H1 (cell line): ENCODE measurements at regions of chr11 and their contacts with region 1.

Region 1: GRCh38 chr11:1572197-1573076 is at the start of gene DUSP8:
- DNase-seq: peak in 1 of 2 experiments; percentile 88
- H3K4me3 ChIP-seq: peak within 1 kb of the TSS; percentile 27 to 71 (median 34)
- H3K27ac ChIP-seq: no peak within 1 kb of the TSS
- H3K4me1 ChIP-seq: peaks cover 0 to 46% (median 31%) of the 10 kb centered on the region in 4 experiments; a peak in 6 of 7 replicates
- H3K27me3 ChIP-seq: peaks cover 18 to 54% (median 49%) of the 10 kb centered on the region in 4 experiments
- CTCF ChIP-seq: no peak
- EP300 ChIP-seq: no peak
- POLR2A ChIP-seq: no peak
- RAD21 ChIP-seq: no peak
- total RNA-seq, gene DUSP8: 2.1 and 2.8 TPM in 2 replicates

Region 2: DNA sequence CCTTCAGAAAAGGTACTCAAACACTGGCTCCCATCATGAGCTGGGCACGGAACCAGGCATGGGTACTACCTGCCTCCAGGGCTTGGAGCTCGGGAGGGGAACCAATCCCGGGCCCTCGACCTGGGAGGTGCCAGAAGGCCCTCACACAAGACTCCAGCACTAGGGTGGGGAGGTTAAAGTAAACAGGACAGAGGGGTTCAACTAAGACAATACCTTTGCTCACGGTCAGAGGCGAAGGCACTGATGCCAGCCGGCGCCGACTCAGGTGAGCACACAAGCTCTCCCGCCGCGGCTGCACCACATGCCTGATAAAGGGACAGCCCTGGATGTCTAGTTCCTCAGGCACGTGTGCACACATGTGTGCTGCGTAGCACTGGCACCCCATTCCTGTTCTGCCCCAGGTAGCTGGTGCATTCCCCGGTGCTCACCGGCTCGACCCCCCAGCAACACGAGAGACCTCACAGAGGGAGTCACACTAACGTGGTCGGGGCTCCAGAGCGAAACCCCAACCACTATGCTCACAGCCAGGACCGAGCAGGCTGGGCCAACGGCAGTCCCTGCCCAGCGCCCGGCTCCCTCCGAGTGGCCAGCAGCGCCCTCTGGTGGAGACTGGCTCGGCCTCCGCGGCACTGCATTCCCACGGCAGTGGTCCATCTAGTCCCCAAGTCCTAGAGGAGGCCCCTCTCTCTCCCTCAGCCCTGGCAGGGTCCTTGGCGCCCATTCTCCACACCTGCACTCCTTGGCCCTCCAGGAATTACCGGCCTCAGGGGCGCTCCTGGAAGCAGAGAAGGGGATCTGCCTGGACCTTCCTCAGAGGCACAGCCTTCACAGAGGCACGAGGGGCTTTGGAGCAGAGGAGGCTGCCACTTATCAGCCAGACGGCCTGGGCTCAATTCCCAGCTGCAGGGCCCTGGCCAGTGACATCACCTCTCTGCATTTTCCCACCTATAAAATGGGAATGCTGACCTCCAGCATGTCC is 57.1 kb before region 1 on chr11:
- CTCF ChIA-PET with region 1: interaction called, 13 read pairs
- POLR2A ChIA-PET with region 1: no interaction called
- DNase-seq: peak; percentile 49 to 99
- H3K4me3 ChIP-seq: no peak overlapping the region
- H3K27ac ChIP-seq: no peak overlapping the region
- H3K4me1 ChIP-seq: peaks cover 0 to 9% (median 8%) of the 10 kb centered on the region in 4 experiments; a peak in 6 of 7 replicates
- H3K27me3 ChIP-seq: no peaks in the 10 kb centered on the region
- CTCF ChIP-seq: peak; percentile 91 to 98 (median 92)
- EP300 ChIP-seq: no peak
- POLR2A ChIP-seq: no peak
- RAD21 ChIP-seq: peak; percentile 91 to 92

Region 3: GRCh38 chr11:1541474-1542204 is 30.8 kb before region 1 on chr11:
- CTCF ChIA-PET with region 1: interaction called, 144 read pairs
- POLR2A ChIA-PET with region 1: interaction called, 34 read pairs
- DNase-seq: no peak
- H3K4me3 ChIP-seq: no peak overlapping the region
- H3K27ac ChIP-seq: no peak overlapping the region; the same call in 1 of the 2 replicates
- H3K4me1 ChIP-seq: peaks cover 0 to 18% (median 12%) of the 10 kb centered on the region in 4 experiments; a peak in 6 of 7 replicates
- H3K27me3 ChIP-seq: peaks cover 0 to 31% (median 21%) of the 10 kb centered on the region in 4 experiments; a peak in 6 of 7 replicates
- CTCF ChIP-seq: no peak
- EP300 ChIP-seq: no peak
- POLR2A ChIP-seq: no peak
- RAD21 ChIP-seq: no peak

Region 4: GRCh38 chr11:1559119-1559951 is 13.1 kb before region 1 on chr11:
- CTCF ChIA-PET with region 1: interaction called, 140 read pairs
- POLR2A ChIA-PET with region 1: interaction called, 58 read pairs
- DNase-seq: peak in 1 of 2 experiments; percentile 80
- H3K4me3 ChIP-seq: peak overlapping the region in 2 of 4 experiments; percentile 5 to 14; a peak in 1 of 8 replicates
- H3K27ac ChIP-seq: no peak overlapping the region
- H3K4me1 ChIP-seq: peaks cover 8 to 53% (median 41%) of the 10 kb centered on the region in 4 experiments
- H3K27me3 ChIP-seq: peaks cover 18 to 49% (median 41%) of the 10 kb centered on the region in 4 experiments
- CTCF ChIP-seq: no peak
- EP300 ChIP-seq: no peak; a peak in 1 of 3 replicates
- POLR2A ChIP-seq: no peak
- RAD21 ChIP-seq: peak in 1 of 2 experiments; percentile 3; a peak in 1 of 4 replicates

Region 5: DNA sequence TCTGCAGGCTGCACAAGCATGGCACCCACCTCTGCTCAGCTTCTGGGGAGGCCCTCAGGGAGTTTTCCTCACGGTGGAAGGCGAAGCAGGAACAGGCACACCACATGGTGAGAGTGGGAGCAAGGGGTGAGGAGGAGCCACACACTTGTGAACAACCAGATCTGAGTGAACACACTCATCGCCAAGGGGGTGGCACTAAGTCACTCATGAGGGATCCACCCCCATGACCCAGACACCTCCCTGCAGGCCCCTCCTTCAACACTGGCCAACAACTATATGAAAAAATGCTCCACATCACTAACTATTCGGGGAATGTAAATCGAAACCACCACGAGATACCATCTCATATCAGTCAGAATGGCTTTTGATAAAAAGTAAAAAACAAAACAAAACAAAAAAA is 26.4 kb after region 1 on chr11:
- CTCF ChIA-PET with region 1: interaction called, 95 read pairs
- POLR2A ChIA-PET with region 1: interaction called, 6 read pairs
- DNase-seq: no peak
- H3K4me3 ChIP-seq: no peak overlapping the region
- H3K27ac ChIP-seq: no peak overlapping the region
- H3K4me1 ChIP-seq: peaks cover 2 to 13% (median 5%) of the 10 kb centered on the region in 4 experiments
- H3K27me3 ChIP-seq: peaks cover 0 to 4% (median 0%) of the 10 kb centered on the region in 4 experiments; a peak in 1 of 7 replicates
- CTCF ChIP-seq: no peak
- EP300 ChIP-seq: no peak
- POLR2A ChIP-seq: no peak
- RAD21 ChIP-seq: no peak